ENCODE measurements at regions of chr19 and their contacts with region 1.

Region 1: GRCh38 chr19:18251587-18252369 is 22.5 kb downstream of the IQCN start:
- DNase-seq: peak; percentile 86
- H3K4me3 ChIP-seq: no peak overlapping the region
- H3K27ac ChIP-seq: no peak overlapping the region
- H3K4me1 ChIP-seq: no peaks in the 10 kb centered on the region
- H3K27me3 ChIP-seq: peaks cover 19% of the 10 kb centered on the region
- CTCF ChIP-seq: peak; percentile 96
- EP300 ChIP-seq: no peak
- RAD21 ChIP-seq: peak; percentile 96

Region 2: DNA sequence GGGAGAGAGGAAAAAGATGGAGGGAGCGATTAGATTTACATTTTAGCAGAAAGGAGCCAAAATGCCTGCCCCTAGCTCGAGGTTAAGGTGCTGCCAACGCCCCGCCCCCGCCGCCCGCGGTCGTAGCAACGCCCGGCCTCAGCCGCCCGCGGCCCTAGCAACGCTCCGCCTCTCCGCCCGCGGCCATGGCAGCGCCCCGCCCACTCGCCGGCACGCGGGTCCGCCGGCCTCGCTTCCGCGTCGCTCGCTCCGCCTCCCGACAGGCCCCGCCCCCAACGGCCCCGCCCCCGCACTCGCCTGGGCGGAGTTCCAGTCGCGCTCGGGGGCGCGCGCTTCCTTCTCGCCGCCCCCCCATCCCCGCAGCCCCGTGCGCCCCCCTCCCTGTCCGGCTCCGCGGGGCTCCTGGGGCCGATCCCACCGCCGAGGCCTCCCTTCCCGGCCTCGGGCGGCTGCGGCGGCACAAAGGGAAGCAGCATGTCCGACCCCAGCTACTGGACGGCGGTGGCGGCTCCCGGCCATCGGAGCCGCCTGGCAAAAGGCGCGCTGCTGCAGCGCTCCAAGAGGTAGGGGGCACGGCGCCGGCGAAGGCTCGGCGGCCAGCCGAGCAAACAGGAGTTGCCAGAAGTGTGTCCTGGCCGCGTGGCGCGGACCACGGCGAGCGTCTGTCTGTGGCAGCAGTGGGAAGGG is 133.9 kb before region 1 on chr19:
- CTCF ChIA-PET with region 1: interaction called, 15 read pairs
- POLR2A ChIA-PET with region 1: no interaction called
- DNase-seq: peak; percentile 99
- H3K4me3 ChIP-seq: peak overlapping the region; percentile 56 to 73
- H3K27ac ChIP-seq: peak overlapping the region in 1 of 2 experiments; percentile 24; a peak in 1 of 4 replicates
- H3K4me1 ChIP-seq: peaks cover 3 to 13% of the 10 kb centered on the region in 2 experiments; a peak in 2 of 4 replicates
- H3K27me3 ChIP-seq: no peaks in the 10 kb centered on the region
- CTCF ChIP-seq: peak; percentile 22
- EP300 ChIP-seq: no peak
- RAD21 ChIP-seq: no peak

Region 3: DNA sequence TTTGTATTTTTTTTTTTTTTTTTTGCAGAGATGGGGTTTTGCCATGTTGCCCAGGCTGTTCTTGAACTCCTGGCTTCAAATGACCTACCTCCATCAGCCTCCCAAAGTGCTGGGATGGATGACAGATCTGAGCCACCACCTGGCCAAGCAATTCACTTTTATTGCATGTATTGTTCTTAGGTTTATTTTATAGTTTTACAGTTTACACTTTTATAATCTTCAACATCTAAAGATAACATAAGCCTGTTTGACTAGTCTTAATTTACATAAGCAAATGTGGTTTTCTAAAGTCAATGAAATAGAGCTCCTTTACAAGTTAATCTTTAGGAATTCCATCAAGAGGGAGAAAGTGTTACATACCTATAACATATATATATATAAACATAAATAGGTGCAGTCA is 68.2 kb before region 1 on chr19:
- CTCF ChIA-PET with region 1: interaction called, 10 read pairs
- POLR2A ChIA-PET with region 1: no interaction called
- DNase-seq: no peak
- H3K4me3 ChIP-seq: no peak overlapping the region
- H3K27ac ChIP-seq: no peak overlapping the region
- H3K4me1 ChIP-seq: no peaks in the 10 kb centered on the region
- H3K27me3 ChIP-seq: no peaks in the 10 kb centered on the region
- CTCF ChIP-seq: no peak
- EP300 ChIP-seq: no peak
- RAD21 ChIP-seq: no peak

Region 4: GRCh38 chr19:18211683-18212082 is 40.1 kb before region 1 on chr19:
- CTCF ChIA-PET with region 1: interaction called, 505 read pairs
- POLR2A ChIA-PET with region 1: interaction called, 7 read pairs
- DNase-seq: no peak
- H3K4me3 ChIP-seq: no peak overlapping the region
- H3K27ac ChIP-seq: no peak overlapping the region
- H3K4me1 ChIP-seq: peaks cover 0 to 3% of the 10 kb centered on the region in 2 experiments; a peak in 1 of 4 replicates
- H3K27me3 ChIP-seq: no peaks in the 10 kb centered on the region
- CTCF ChIP-seq: no peak
- EP300 ChIP-seq: no peak
- RAD21 ChIP-seq: no peak

Region 5: DNA sequence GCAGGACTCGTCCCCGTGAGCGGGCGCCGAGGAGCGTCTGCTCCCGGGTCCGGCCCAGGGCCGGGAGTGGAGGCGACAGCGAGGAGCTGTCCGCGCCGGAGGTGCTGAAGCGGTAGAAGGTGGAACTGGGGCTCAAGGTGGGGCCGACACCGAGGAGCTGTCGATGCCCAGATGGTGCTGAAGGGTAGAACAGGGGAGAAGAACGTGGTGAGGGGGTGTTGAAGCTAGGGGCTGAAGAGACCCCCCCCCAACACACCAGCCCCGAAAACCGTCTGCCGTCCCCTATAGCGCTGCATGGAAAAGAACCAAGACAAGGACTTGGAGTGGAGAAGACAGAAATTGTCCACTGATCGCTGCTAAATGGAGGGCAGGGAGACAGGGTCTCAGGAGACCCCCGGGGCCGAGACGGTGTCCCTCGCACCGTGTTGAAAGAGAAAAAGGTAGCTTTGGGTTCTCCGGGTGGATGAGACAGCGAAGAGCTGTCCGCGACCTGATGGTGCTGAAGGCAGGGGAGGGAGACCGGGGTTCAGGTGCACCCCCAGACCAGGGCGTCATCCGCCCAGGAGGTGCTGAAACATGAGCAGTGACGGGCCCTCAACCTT is 18.5 kb before region 1 on chr19:
- CTCF ChIA-PET with region 1: interaction called, 82 read pairs
- POLR2A ChIA-PET with region 1: no interaction called
- DNase-seq: peak; percentile 83
- H3K4me3 ChIP-seq: peak overlapping the region; percentile 35 to 42; a peak in 3 of 4 replicates
- H3K27ac ChIP-seq: no peak overlapping the region; a peak in 1 of 4 replicates
- H3K4me1 ChIP-seq: peaks cover 0 to 11% of the 10 kb centered on the region in 2 experiments; a peak in 1 of 4 replicates
- H3K27me3 ChIP-seq: no peaks in the 10 kb centered on the region
- CTCF ChIP-seq: no peak
- EP300 ChIP-seq: no peak
- RAD21 ChIP-seq: no peak

Region 6: DNA sequence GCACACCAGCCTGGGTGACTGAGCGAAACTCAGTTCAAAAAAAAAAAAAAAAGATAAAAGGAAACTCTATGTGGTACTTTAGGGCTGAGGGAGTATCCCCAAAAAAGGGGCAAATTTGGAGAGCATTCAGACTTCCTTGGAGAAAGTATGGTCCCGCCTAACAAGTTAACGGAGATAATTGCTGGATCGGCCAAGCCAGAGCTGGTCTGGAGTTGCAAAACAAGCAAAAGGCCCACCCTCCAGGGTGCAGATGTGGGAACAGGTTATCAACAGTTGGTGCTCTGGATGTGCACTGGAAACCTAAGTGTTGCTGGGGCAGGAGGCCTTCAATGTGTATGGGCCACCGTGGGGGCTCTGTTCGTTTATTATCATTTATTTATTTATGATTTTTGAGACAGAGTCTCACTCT is 19.7 kb after region 1 on chr19:
- CTCF ChIA-PET with region 1: interaction called, 56 read pairs
- POLR2A ChIA-PET with region 1: interaction called, 3 read pairs
- DNase-seq: no peak
- H3K4me3 ChIP-seq: no peak overlapping the region
- H3K27ac ChIP-seq: no peak overlapping the region
- H3K4me1 ChIP-seq: peaks cover 0 to 8% of the 10 kb centered on the region in 2 experiments; a peak in 3 of 4 replicates
- H3K27me3 ChIP-seq: no peaks in the 10 kb centered on the region
- CTCF ChIP-seq: no peak
- EP300 ChIP-seq: no peak
- RAD21 ChIP-seq: no peak

Measured in SK-N-SH (cell line).